B cell (primary cell): ENCODE measurements at regions of chr6 and their contacts with region 1.

Region 1: GRCh38 chr6:43355862-43356590 is 13.4 kb downstream of the ZNF318 start:
- DNase-seq: no peak
- ATAC-seq: peak; percentile 49
- H3K4me3 ChIP-seq: no peak overlapping the region
- H3K4me3 Mint-ChIP-seq: no peak overlapping the region
- H3K27ac ChIP-seq: peak overlapping the region in 1 of 2 donors; percentile 46
- H3K27ac Mint-ChIP-seq: peak overlapping the region; percentile 20
- H3K4me1 ChIP-seq: peaks cover 0 to 4% of the 10 kb centered on the region in 2 donors
- H3K4me1 Mint-ChIP-seq: peaks cover 25% of the 10 kb centered on the region
- H3K27me3 ChIP-seq: no peaks in the 10 kb centered on the region
- H3K27me3 Mint-ChIP-seq: no peaks in the 10 kb centered on the region
- CTCF ChIP-seq: no peak

Region 2: GRCh38 chr6:43263314-43264178 is 92.5 kb before region 1 on chr6:
- CTCF ChIA-PET with region 1: interaction called, 25 read pairs
- POLR2A ChIA-PET with region 1: interaction called, 3 read pairs
- intact Hi-C with region 1: loop called (anchors 1 kb)
- DNase-seq: peak; percentile 84
- ATAC-seq: peak; percentile 98
- H3K4me3 ChIP-seq: no peak overlapping the region
- H3K4me3 Mint-ChIP-seq: no peak overlapping the region
- H3K27ac ChIP-seq: no peak overlapping the region
- H3K27ac Mint-ChIP-seq: no peak overlapping the region
- H3K4me1 ChIP-seq: no peaks in the 10 kb centered on the region
- H3K4me1 Mint-ChIP-seq: peaks cover 8% of the 10 kb centered on the region
- H3K27me3 ChIP-seq: peaks cover 0 to under 1% (median 0%) of the 10 kb centered on the region in 4 experiments
- H3K27me3 Mint-ChIP-seq: peaks cover 4% of the 10 kb centered on the region
- CTCF ChIP-seq: peak; percentile 84

Region 3: GRCh38 chr6:43269273-43270007 is 86.6 kb before region 1 on chr6:
- CTCF ChIA-PET with region 1: interaction called, 25 read pairs
- POLR2A ChIA-PET with region 1: interaction called, 3 read pairs
- intact Hi-C with region 1: no loop called
- DNase-seq: peak; percentile 58
- ATAC-seq: peak; percentile 22
- H3K4me3 ChIP-seq: peak overlapping the region in 4 of 5 experiments; percentile 36 to 54 (median 48)
- H3K4me3 Mint-ChIP-seq: peak overlapping the region; percentile 80
- H3K27ac ChIP-seq: no peak overlapping the region
- H3K27ac Mint-ChIP-seq: peak overlapping the region; percentile 37
- H3K4me1 ChIP-seq: peaks cover 26 to 34% of the 10 kb centered on the region in 2 donors
- H3K4me1 Mint-ChIP-seq: peaks cover 44% of the 10 kb centered on the region
- H3K27me3 ChIP-seq: peaks cover 0 to 11% (median 5%) of the 10 kb centered on the region in 4 experiments
- H3K27me3 Mint-ChIP-seq: peaks cover 10% of the 10 kb centered on the region
- CTCF ChIP-seq: no peak

Region 4: GRCh38 chr6:43396407-43397149 is 40.6 kb after region 1 on chr6:
- CTCF ChIA-PET with region 1: interaction called, 45 read pairs
- POLR2A ChIA-PET with region 1: interaction called, 4 read pairs
- intact Hi-C with region 1: no loop called
- DNase-seq: no peak
- ATAC-seq: no peak
- H3K4me3 ChIP-seq: no peak overlapping the region
- H3K4me3 Mint-ChIP-seq: no peak overlapping the region
- H3K27ac ChIP-seq: no peak overlapping the region
- H3K27ac Mint-ChIP-seq: no peak overlapping the region
- H3K4me1 ChIP-seq: peaks cover 20 to 22% of the 10 kb centered on the region in 2 donors
- H3K4me1 Mint-ChIP-seq: peaks cover 27% of the 10 kb centered on the region
- H3K27me3 ChIP-seq: peaks cover 0 to 5% (median 0%) of the 10 kb centered on the region in 4 experiments
- H3K27me3 Mint-ChIP-seq: no peaks in the 10 kb centered on the region
- CTCF ChIP-seq: no peak

Region 5: DNA sequence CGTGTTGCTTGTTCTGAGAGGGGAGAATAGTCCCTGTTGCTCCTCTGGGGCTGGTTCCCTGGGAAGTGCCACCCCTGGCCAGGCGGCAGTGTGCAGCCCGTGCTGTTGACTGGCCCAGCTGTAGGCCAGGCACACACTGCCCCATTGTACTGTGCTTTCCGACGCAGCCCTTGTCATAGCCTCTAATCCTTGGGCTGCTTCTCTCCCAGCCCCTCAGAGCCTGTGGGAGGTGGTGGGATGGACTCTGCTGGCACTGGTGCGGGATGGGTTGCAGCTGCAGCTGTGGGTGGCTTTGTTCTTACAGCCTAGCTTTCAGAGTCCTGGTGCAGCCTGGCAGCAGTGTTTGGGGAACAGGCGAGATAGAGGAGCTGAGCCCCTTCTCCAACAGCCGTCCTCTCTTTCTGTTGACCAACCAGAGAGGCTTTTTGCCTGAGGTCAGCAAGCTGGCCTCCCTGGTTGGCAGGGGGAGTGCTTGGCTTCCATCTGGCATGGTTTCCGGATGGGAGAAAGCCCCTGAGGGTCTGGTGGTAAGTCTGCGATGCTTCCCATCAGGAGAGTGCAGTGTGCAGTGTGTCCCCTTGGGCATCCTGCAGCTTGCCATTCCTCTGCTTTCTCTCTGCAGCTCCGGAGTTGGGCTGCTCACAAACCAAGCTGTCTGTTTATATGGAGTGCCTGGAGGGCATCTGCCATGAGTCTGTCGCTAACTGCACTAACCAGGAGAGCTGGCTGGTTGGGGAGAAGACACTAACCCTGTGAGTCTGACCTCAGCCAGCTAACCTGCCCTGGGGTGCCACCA is 133.4 kb after region 1 on chr6:
- CTCF ChIA-PET with region 1: no interaction called
- POLR2A ChIA-PET with region 1: no interaction called
- intact Hi-C with region 1: no loop called
- DNase-seq: no peak
- ATAC-seq: no peak
- H3K4me3 ChIP-seq: no peak overlapping the region
- H3K4me3 Mint-ChIP-seq: no peak overlapping the region
- H3K27ac ChIP-seq: no peak overlapping the region
- H3K27ac Mint-ChIP-seq: no peak overlapping the region
- H3K4me1 ChIP-seq: no peaks in the 10 kb centered on the region
- H3K4me1 Mint-ChIP-seq: peaks cover 12% of the 10 kb centered on the region
- H3K27me3 ChIP-seq: no peaks in the 10 kb centered on the region
- H3K27me3 Mint-ChIP-seq: no peaks in the 10 kb centered on the region
- CTCF ChIP-seq: no peak

Region 6: DNA sequence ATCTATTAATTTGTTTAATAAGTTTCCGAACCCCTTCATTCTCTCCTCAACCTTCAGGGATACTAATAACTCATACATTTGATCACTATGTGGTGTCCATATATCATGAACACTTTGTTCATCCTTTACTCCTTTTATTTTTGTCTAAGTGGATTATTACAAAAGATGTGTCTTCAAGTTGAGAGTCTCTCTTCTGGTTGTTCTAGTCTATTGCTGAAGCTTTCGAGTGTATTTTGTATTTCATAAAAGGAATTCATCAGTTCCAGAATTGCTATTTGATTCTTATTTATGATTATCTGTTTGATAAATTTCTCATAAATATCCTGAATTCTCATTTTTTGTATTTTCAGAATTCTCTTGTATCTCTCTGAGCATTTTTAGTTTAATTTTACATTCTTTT is 1875.6 kb after region 1 on chr6:
- CTCF ChIA-PET with region 1: no interaction called
- POLR2A ChIA-PET with region 1: no interaction called
- intact Hi-C with region 1: no loop called
- DNase-seq: no peak
- ATAC-seq: no peak
- H3K4me3 ChIP-seq: no peak overlapping the region
- H3K4me3 Mint-ChIP-seq: no peak overlapping the region
- H3K27ac ChIP-seq: no peak overlapping the region
- H3K27ac Mint-ChIP-seq: no peak overlapping the region
- H3K4me1 ChIP-seq: no peaks in the 10 kb centered on the region
- H3K4me1 Mint-ChIP-seq: no peaks in the 10 kb centered on the region
- H3K27me3 ChIP-seq: no peaks in the 10 kb centered on the region
- H3K27me3 Mint-ChIP-seq: no peaks in the 10 kb centered on the region
- CTCF ChIP-seq: no peak